B cell (primary cell): ENCODE measurements at regions of chr9 and their contacts with region 1.

Region 1: GRCh38 chr9:91720751-91721705 is 229.0 kb downstream of the ROR2 start:
- DNase-seq: peak; percentile 73
- ATAC-seq: peak; percentile 74
- H3K4me3 ChIP-seq: peak overlapping the region in 1 of 5 experiments; percentile 10
- H3K4me3 Mint-ChIP-seq: peak overlapping the region; percentile 32
- H3K27ac ChIP-seq: no peak overlapping the region
- H3K27ac Mint-ChIP-seq: peak overlapping the region; percentile 46
- H3K4me1 ChIP-seq: peaks cover 13 to 19% of the 10 kb centered on the region in 2 donors
- H3K4me1 Mint-ChIP-seq: peaks cover 23% of the 10 kb centered on the region
- H3K27me3 ChIP-seq: peaks cover 0 to 4% (median 0%) of the 10 kb centered on the region in 4 experiments
- H3K27me3 Mint-ChIP-seq: no peaks in the 10 kb centered on the region
- CTCF ChIP-seq: no peak

Region 2: GRCh38 chr9:91734371-91734981 is 13.4 kb after region 1 on chr9:
- CTCF ChIA-PET with region 1: interaction called, 10 read pairs
- POLR2A ChIA-PET with region 1: no interaction called
- intact Hi-C with region 1: no loop called
- DNase-seq: peak; percentile 67
- ATAC-seq: peak; percentile 43
- H3K4me3 ChIP-seq: no peak overlapping the region
- H3K4me3 Mint-ChIP-seq: no peak overlapping the region
- H3K27ac ChIP-seq: no peak overlapping the region
- H3K27ac Mint-ChIP-seq: no peak overlapping the region
- H3K4me1 ChIP-seq: no peaks in the 10 kb centered on the region
- H3K4me1 Mint-ChIP-seq: no peaks in the 10 kb centered on the region
- H3K27me3 ChIP-seq: peaks cover 0 to 10% (median 0%) of the 10 kb centered on the region in 4 experiments
- H3K27me3 Mint-ChIP-seq: peaks cover 26% of the 10 kb centered on the region
- CTCF ChIP-seq: peak; percentile 99

Region 3: DNA sequence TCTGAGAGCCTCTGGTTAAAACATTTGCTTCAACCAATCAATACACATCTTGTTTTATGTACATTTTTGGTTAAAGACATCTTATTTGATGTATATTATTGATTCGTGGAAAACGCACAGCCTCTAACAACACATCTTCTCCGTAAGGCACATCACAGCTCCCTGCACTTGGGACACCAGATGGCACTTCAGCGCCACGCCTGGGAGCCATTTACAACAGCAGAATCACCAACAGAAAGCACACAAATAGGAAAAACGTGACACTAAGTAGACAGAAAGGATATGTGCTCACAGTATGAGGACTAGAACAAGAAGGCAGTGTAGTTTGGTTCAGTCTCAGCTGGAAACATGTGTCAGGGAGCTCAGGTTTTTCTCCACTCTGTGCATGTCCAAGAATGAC is 29.3 kb after region 1 on chr9:
- CTCF ChIA-PET with region 1: no interaction called
- POLR2A ChIA-PET with region 1: no interaction called
- intact Hi-C with region 1: no loop called
- DNase-seq: no peak
- ATAC-seq: no peak
- H3K4me3 ChIP-seq: no peak overlapping the region
- H3K4me3 Mint-ChIP-seq: no peak overlapping the region
- H3K27ac ChIP-seq: no peak overlapping the region
- H3K27ac Mint-ChIP-seq: no peak overlapping the region
- H3K4me1 ChIP-seq: no peaks in the 10 kb centered on the region
- H3K4me1 Mint-ChIP-seq: no peaks in the 10 kb centered on the region
- H3K27me3 ChIP-seq: peaks cover 0 to 7% (median 0%) of the 10 kb centered on the region in 4 experiments
- H3K27me3 Mint-ChIP-seq: peaks cover 15% of the 10 kb centered on the region
- CTCF ChIP-seq: no peak